ENCODE measurements at regions of chr1 and their contacts with region 1.

Region 1: GRCh38 chr1:9438431-9439073 is 100.7 kb upstream of the SLC25A33 start:
- DNase-seq: peak; percentile 95
- H3K4me3 ChIP-seq: no peak overlapping the region
- H3K27ac ChIP-seq: peak overlapping the region; percentile 50
- H3K4me1 ChIP-seq: peaks cover 49% of the 10 kb centered on the region
- H3K27me3 ChIP-seq: no peaks in the 10 kb centered on the region
- CTCF ChIP-seq: no peak
- POLR2A ChIP-seq: no peak

Region 2: DNA sequence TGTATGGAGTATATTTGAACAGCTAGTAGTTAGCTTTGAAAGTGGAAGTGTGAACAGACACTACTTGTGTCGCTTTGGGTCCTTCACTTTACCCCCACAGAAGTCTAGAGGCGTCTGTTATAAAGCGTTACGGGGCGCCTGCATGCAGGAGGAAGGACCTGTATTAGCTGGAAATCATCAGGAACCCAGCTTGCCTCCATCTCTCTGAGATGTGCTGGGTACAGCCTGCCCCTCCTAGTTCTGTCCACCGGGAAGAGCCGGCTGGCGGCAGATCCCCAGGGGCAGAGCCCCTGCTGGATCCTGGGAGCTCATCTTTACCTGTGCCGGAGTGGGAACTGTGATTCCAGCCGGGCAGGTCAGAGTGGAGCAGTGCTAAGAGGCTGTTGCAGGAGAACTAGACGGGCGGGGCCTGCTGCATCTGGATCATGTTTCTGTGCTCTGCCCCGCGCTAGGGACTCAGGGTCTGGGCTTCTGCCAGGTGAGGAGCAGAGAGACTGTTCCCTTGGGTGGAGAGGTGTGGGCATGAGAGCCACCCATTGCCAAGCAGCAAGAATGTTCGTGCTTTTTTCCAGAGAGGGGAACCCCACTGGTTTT is 168.2 kb before region 1 on chr1:
- CTCF ChIA-PET with region 1: interaction called, 10 read pairs
- POLR2A ChIA-PET with region 1: no interaction called
- dilution Hi-C with region 1: no loop called
- intact Hi-C with region 1: no loop called
- DNase-seq: no peak
- H3K4me3 ChIP-seq: no peak overlapping the region
- H3K27ac ChIP-seq: no peak overlapping the region
- H3K4me1 ChIP-seq: peaks cover 4% of the 10 kb centered on the region
- H3K27me3 ChIP-seq: no peaks in the 10 kb centered on the region
- CTCF ChIP-seq: no peak
- POLR2A ChIP-seq: no peak

Region 3: GRCh38 chr1:9317591-9318417 is 120.7 kb before region 1 on chr1:
- CTCF ChIA-PET with region 1: no interaction called
- POLR2A ChIA-PET with region 1: interaction called, 13 read pairs
- dilution Hi-C with region 1: no loop called
- intact Hi-C with region 1: no loop called
- DNase-seq: peak; percentile 83
- H3K4me3 ChIP-seq: no peak overlapping the region
- H3K27ac ChIP-seq: peak overlapping the region; percentile 79
- H3K4me1 ChIP-seq: peaks cover 18% of the 10 kb centered on the region
- H3K27me3 ChIP-seq: no peaks in the 10 kb centered on the region
- CTCF ChIP-seq: no peak
- POLR2A ChIP-seq: no peak

Region 4: DNA sequence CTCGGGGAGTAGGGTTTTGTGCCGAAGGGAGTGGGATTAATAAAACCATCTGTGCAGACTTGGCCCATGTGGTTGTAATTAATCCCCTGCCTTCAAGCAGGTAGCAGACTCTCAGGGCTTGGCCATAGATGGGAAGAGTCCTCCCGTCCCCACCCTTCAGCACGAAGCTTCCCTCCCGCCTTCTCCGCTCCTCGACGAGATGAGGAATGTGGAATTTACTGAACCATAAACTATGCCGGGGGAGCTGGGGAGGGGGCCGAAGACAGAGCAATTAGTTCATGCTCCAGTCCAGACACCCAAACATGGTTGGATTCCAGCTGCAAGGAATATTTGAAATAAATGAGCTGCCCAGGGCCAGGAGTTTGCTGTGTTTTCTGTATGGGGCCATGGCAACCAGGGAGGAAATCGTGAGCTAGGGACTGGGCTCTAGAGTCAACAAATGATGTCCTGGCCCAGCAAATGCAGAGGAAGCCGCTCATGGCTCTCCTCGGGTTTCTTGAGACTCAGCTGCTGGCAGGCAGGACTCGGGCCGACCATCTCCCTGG is 67.1 kb before region 1 on chr1:
- CTCF ChIA-PET with region 1: interaction called, 5 read pairs
- POLR2A ChIA-PET with region 1: no interaction called
- dilution Hi-C with region 1: no loop called
- intact Hi-C with region 1: loop called (anchors 2 kb)
- DNase-seq: peak; percentile 95
- H3K4me3 ChIP-seq: no peak overlapping the region
- H3K27ac ChIP-seq: peak overlapping the region; percentile 48
- H3K4me1 ChIP-seq: peaks cover 31% of the 10 kb centered on the region
- H3K27me3 ChIP-seq: no peaks in the 10 kb centered on the region
- CTCF ChIP-seq: no peak
- POLR2A ChIP-seq: no peak

Region 5: GRCh38 chr1:9413148-9413876 is 25.2 kb before region 1 on chr1:
- CTCF ChIA-PET with region 1: interaction called, 7 read pairs
- POLR2A ChIA-PET with region 1: interaction called, 4 read pairs
- dilution Hi-C with region 1: no loop called
- intact Hi-C with region 1: loop called (anchors 1 kb)
- DNase-seq: peak; percentile 92
- H3K4me3 ChIP-seq: no peak overlapping the region
- H3K27ac ChIP-seq: peak overlapping the region; percentile 80
- H3K4me1 ChIP-seq: peaks cover 20% of the 10 kb centered on the region
- H3K27me3 ChIP-seq: no peaks in the 10 kb centered on the region
- CTCF ChIP-seq: no peak
- POLR2A ChIP-seq: no peak

Region 6: DNA sequence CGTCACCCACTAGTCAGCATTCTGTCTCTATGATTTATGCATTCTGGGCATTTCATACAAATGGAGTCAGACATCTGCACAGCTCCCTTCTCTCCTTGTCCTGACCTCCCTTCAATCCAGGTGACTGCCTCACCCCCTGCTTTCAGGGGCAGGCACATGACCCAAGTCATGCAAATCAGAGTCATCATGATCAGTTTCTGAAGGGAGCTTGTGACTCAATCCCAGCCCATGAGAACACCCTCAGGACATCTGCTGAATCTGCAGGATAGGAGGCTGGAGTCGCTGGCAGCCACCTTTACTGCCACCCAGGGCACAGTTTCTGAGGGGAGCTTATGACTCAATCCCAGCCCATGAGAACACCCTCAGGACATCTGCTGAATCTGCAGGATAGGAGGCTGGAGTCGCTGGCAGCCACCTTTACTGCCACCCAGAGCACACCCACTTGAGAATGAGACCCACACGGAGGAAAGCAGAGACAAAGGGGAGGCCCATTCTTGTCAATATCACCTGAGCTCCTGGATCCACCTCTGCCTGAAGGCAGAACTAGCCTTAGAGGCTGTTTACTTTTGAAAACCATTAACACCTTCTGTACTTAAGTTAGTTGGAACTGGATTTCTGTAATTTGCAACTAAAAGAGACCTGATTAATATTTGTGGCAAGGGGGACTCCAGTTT is 38.4 kb after region 1 on chr1:
- CTCF ChIA-PET with region 1: no interaction called
- POLR2A ChIA-PET with region 1: no interaction called
- dilution Hi-C with region 1: no loop called
- intact Hi-C with region 1: no loop called
- DNase-seq: no peak
- H3K4me3 ChIP-seq: no peak overlapping the region
- H3K27ac ChIP-seq: no peak overlapping the region
- H3K4me1 ChIP-seq: no peaks in the 10 kb centered on the region
- H3K27me3 ChIP-seq: no peaks in the 10 kb centered on the region
- CTCF ChIP-seq: no peak
- POLR2A ChIP-seq: no peak

Region 7: GRCh38 chr1:10398734-10399623 is 960.4 kb after region 1 on chr1 and contains the start of gene PGD:
- CTCF ChIA-PET with region 1: no interaction called
- POLR2A ChIA-PET with region 1: no interaction called
- dilution Hi-C with region 1: no loop called
- intact Hi-C with region 1: no loop called
- DNase-seq: peak; percentile 98
- H3K4me3 ChIP-seq: peak within 1 kb of the TSS; percentile 67 to 96 (median 95)
- H3K27ac ChIP-seq: peak within 1 kb of the TSS; percentile 76
- H3K4me1 ChIP-seq: peaks cover 35% of the 10 kb centered on the region
- H3K27me3 ChIP-seq: no peaks in the 10 kb centered on the region
- CTCF ChIP-seq: no peak
- POLR2A ChIP-seq: peak; percentile 87
- total RNA-seq, gene PGD: 303 and 307 TPM in 2 replicates

Measured in endothelial cell of umbilical vein (primary cell).